ENCODE measurements at regions of chr3 and their contacts with region 1.

Region 1: DNA sequence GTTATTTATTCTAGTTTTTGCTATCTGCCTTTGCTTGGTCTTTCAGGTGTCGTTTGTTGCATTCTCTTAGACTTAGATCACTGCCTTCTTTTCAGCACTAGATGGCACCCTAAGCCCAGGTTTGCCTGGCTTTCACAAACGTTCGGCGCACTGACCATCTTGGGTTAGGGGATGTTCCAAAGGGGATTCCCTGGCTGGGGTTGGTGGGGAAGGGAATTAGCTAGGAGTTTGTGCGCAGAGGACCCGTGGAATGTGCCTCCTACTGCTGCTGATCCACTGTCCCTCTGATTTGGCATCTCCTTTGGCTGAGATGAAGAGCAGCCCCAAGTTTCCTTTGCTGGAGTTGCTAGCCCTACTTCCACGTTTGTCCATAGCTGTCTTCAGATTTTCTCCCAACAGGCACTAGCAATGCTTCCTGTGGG is 33.9 kb downstream of the PFN2 start:
- DNase-seq: no peak
- H3K4me3 ChIP-seq: no peak overlapping the region
- CTCF ChIP-seq: peak; percentile 72

Region 2: DNA sequence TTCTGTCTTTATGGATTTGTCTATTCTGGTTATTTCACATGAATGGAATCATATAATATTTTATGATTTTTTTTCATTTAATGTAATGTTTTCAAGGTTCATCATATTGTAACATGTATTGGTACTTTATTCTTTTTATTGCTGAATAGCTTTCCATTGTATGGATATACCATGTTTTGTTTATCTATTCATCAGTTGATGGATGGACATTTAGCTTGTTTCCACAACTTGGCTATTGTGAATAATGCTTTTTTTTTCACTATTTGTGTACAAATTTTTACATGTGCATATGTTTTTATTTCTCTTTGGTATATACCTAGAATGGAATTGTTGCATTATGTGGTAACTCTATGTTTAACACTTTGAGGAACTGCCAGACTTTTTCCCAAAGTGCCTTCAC is 30.8 kb before region 1 on chr3:
- CTCF ChIA-PET with region 1: no interaction called
- POLR2A ChIA-PET with region 1: no interaction called
- DNase-seq: no peak
- H3K4me3 ChIP-seq: no peak overlapping the region
- CTCF ChIP-seq: no peak

Region 3: GRCh38 chr3:149958171-149958796 is 21.5 kb after region 1 on chr3:
- CTCF ChIA-PET with region 1: interaction called, 47 read pairs
- POLR2A ChIA-PET with region 1: no interaction called
- DNase-seq: no peak
- H3K4me3 ChIP-seq: no peak overlapping the region
- CTCF ChIP-seq: no peak

Region 4: GRCh38 chr3:150177673-150178381 is 241.0 kb after region 1 on chr3:
- CTCF ChIA-PET with region 1: interaction called, 52 read pairs
- POLR2A ChIA-PET with region 1: no interaction called
- DNase-seq: peak; percentile 33
- H3K4me3 ChIP-seq: no peak overlapping the region
- CTCF ChIP-seq: no peak

Region 5: GRCh38 chr3:150216041-150216811 is 279.4 kb after region 1 on chr3:
- CTCF ChIA-PET with region 1: interaction called, 103 read pairs
- POLR2A ChIA-PET with region 1: no interaction called
- DNase-seq: peak; percentile 68
- H3K4me3 ChIP-seq: no peak overlapping the region
- CTCF ChIP-seq: no peak

Region 6: GRCh38 chr3:150887025-150887424 is 950.2 kb after region 1 on chr3:
- CTCF ChIA-PET with region 1: no interaction called
- POLR2A ChIA-PET with region 1: no interaction called
- DNase-seq: no peak
- H3K4me3 ChIP-seq: no peak overlapping the region
- CTCF ChIP-seq: no peak